ENCODE measurements at regions of chr1 and their contacts with region 1.

Region 1: GRCh38 chr1:234065794-234066447 is 161.4 kb downstream of the SLC35F3 start:
- DNase-seq: peak; percentile 47
- ATAC-seq: peak; percentile 82
- H3K4me3 ChIP-seq: no peak overlapping the region
- H3K27ac ChIP-seq: no peak overlapping the region
- H3K4me1 ChIP-seq: no peaks in the 10 kb centered on the region
- H3K27me3 ChIP-seq: no peaks in the 10 kb centered on the region
- CTCF ChIP-seq: peak; percentile 67
- POLR2A ChIP-seq: no peak
- RAD21 ChIP-seq: peak; percentile 58

Region 2: DNA sequence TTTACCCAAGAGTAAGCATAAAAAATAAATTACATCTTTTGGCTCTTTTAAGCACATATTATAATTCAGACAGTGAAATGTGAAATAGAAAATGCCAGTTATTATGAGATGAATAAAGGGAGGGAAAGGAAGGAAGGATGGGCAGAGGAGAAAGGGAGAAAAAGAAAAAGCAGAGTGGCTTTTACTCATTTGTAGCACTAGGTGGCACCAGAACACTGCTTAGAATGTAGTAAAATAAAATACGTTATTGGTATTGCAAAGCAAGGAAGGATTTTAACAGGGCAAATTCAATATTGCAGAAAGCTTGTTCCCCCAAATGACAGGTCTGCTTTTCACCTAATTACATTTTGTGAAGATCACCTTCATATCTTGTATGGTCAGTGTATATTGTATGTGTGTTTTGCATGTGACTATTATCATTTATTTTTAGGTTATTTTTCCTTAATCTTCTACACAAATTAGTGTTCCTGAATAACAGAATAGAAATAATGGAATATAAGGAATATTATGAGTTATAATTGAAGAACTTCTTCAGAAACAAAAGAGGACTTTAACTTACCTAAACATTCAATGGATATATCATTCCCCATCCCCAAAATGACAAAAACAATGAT is 761.3 kb before region 1 on chr1:
- CTCF ChIA-PET with region 1: interaction called, 3 read pairs
- POLR2A ChIA-PET with region 1: no interaction called
- dilution Hi-C with region 1: no loop called
- in situ Hi-C with region 1: loop called (anchors 10 kb)
- intact Hi-C with region 1: loop called (anchors 1 kb)
- DNase-seq: peak; percentile 30
- ATAC-seq: 0 out of 2 replicates have a peak, but pooled peaks have one; percentile 67
- H3K4me3 ChIP-seq: no peak overlapping the region
- H3K27ac ChIP-seq: no peak overlapping the region
- H3K4me1 ChIP-seq: peaks cover 2% of the 10 kb centered on the region; the same call in 1 of the 2 replicates
- H3K27me3 ChIP-seq: no peaks in the 10 kb centered on the region
- CTCF ChIP-seq: peak; percentile 76
- POLR2A ChIP-seq: no peak
- RAD21 ChIP-seq: peak; percentile 74

Region 3: GRCh38 chr1:233364695-233365539 is 701.0 kb before region 1 on chr1:
- CTCF ChIA-PET with region 1: interaction called, 4 read pairs
- POLR2A ChIA-PET with region 1: no interaction called
- dilution Hi-C with region 1: no loop called
- in situ Hi-C with region 1: no loop called
- intact Hi-C with region 1: loop called (anchors 1 kb)
- DNase-seq: peak; percentile 23
- ATAC-seq: peak; percentile 73
- H3K4me3 ChIP-seq: no peak overlapping the region
- H3K27ac ChIP-seq: no peak overlapping the region
- H3K4me1 ChIP-seq: no peaks in the 10 kb centered on the region
- H3K27me3 ChIP-seq: peaks cover 3% of the 10 kb centered on the region; the same call in 1 of the 2 replicates
- CTCF ChIP-seq: peak; percentile 63
- POLR2A ChIP-seq: no peak
- RAD21 ChIP-seq: peak; percentile 46

Region 4: GRCh38 chr1:233394860-233395717 is 670.8 kb before region 1 on chr1:
- CTCF ChIA-PET with region 1: interaction called, 7 read pairs
- POLR2A ChIA-PET with region 1: no interaction called
- dilution Hi-C with region 1: no loop called
- in situ Hi-C with region 1: loop called (anchors 10 kb)
- intact Hi-C with region 1: loop called (anchors 1 kb)
- DNase-seq: peak; percentile 50
- ATAC-seq: peak; percentile 97
- H3K4me3 ChIP-seq: no peak overlapping the region
- H3K27ac ChIP-seq: no peak overlapping the region
- H3K4me1 ChIP-seq: no peaks in the 10 kb centered on the region
- H3K27me3 ChIP-seq: no peaks in the 10 kb centered on the region; the same call in 1 of the 2 replicates
- CTCF ChIP-seq: peak; percentile 73
- POLR2A ChIP-seq: no peak
- RAD21 ChIP-seq: peak; percentile 66

Region 5: DNA sequence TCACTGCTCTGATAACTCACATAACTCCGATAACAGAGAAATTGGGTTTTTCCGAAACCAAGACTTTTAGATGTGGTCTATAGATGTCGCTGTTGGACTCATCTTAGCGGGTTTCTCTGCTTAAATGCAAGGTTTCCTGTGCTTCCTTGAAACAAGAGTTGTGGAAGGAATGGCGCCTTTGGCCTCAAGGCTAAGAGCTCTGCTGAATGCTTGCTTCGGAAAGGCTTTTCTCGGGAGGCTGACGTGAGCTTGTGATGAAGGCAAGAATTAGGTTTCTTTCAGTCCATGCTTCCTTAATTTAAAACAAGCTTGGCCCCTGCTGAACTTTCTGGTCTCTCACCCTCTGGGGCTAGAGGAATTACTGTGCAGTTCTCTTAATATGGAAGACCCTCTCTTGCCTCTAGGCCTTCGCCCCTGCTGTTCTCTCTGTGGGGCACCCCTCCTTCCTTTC is 624.9 kb before region 1 on chr1:
- CTCF ChIA-PET with region 1: interaction called, 3 read pairs
- POLR2A ChIA-PET with region 1: no interaction called
- dilution Hi-C with region 1: no loop called
- in situ Hi-C with region 1: no loop called
- intact Hi-C with region 1: loop called (anchors 2 kb)
- DNase-seq: peak; percentile 28
- ATAC-seq: no peak
- H3K4me3 ChIP-seq: no peak overlapping the region
- H3K27ac ChIP-seq: no peak overlapping the region
- H3K4me1 ChIP-seq: no peaks in the 10 kb centered on the region
- H3K27me3 ChIP-seq: no peaks in the 10 kb centered on the region
- CTCF ChIP-seq: peak; percentile 51
- POLR2A ChIP-seq: no peak
- RAD21 ChIP-seq: peak; percentile 56

Region 6: DNA sequence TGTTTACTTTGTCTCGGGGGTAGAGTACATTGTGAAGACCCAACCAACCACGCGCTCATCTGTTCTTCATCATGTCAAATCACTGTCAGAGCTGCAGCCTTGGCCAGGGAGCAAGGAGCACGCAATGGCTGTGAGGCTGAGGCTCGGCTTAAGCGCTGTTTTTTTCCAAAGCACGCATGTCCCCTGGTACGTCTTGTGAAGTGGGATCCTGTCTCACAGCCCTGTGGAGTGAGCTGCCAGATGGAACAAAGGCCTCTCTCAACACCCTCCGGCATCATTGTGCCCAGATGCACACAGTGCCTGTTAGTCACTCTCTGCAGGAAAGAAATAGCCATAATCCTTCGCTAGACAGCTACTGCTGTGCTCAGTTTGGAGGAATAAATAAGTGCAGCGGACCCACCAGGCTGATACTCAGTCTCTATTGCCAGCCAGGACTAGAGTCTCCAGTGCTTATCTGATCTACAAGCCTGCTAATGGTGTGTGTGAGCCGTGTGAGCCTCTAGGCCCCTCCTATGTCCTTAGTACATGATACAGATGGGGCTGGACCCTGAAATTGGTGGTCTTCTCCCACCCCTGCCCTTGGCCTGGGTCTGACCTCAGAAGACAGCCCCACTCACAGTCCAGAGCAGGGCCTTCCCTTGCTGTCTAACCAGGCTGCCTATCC is 216.0 kb after region 1 on chr1:
- CTCF ChIA-PET with region 1: no interaction called
- POLR2A ChIA-PET with region 1: no interaction called
- dilution Hi-C with region 1: no loop called
- in situ Hi-C with region 1: no loop called
- intact Hi-C with region 1: no loop called
- DNase-seq: no peak
- ATAC-seq: no peak
- H3K4me3 ChIP-seq: no peak overlapping the region
- H3K27ac ChIP-seq: no peak overlapping the region
- H3K4me1 ChIP-seq: no peaks in the 10 kb centered on the region
- H3K27me3 ChIP-seq: no peaks in the 10 kb centered on the region
- CTCF ChIP-seq: no peak
- POLR2A ChIP-seq: no peak
- RAD21 ChIP-seq: no peak

Measured in IMR-90 (cell line).